GM12878 (cell line): ENCODE measurements at regions of chr1 and their contacts with region 1.

Region 1: DNA sequence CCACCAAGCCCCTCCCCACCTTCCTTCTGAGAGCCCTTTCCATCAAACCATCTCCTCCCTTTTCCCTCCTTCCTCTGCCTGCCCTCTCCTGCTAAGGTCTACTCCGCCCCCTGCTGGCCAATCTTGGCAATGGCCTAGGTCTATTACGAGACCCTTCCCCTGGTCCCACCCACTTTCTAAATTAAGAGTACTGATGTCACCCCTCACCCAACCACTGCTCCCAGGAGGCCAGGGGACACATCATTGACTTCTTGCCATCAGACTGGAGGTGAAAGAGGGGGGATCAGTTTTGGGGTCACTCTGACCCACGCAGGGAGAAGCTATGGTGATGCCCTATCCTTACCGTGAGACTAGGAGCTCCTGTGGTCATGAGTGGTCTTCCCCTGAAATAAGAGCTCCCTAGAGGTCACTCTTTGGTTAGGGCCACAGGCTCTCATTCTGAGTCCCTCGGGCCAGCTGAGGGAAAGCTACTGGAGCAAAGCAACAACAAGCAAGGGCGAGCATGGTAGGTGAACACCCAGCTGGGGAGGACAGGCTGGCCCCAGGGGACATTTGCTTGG is 34.6 kb upstream of the S100A7 start:
- DNase-seq: no peak
- ATAC-seq: peak; percentile 89
- H3K4me3 ChIP-seq: no peak overlapping the region
- H3K27ac ChIP-seq: no peak overlapping the region
- H3K4me1 ChIP-seq: peaks cover 3% of the 10 kb centered on the region; the same call in 1 of the 2 replicates
- H3K27me3 ChIP-seq: no peaks in the 10 kb centered on the region; a peak in 2 of 4 replicates
- CTCF ChIP-seq: peak; percentile 79 to 91 (median 89)
- EP300 ChIP-seq: no peak
- POLR2A ChIP-seq: no peak
- RAD21 ChIP-seq: peak; percentile 87

Region 2: GRCh38 chr1:153312570-153313193 is 182.4 kb before region 1 on chr1 and contains the start of gene PGLYRP3:
- CTCF ChIA-PET with region 1: interaction called, 14 read pairs
- POLR2A ChIA-PET with region 1: no interaction called
- RAD21 ChIA-PET with region 1: no interaction called
- SMC1A ChIA-PET with region 1: no interaction called
- in situ Hi-C with region 1: no loop called
- intact Hi-C with region 1: no loop called
- DNase-seq: no peak
- ATAC-seq: no peak
- H3K4me3 ChIP-seq: no peak within 1 kb of the TSS
- H3K27ac ChIP-seq: no peak within 1 kb of the TSS
- H3K4me1 ChIP-seq: no peaks in the 10 kb centered on the region
- H3K27me3 ChIP-seq: no peaks in the 10 kb centered on the region
- CTCF ChIP-seq: peak in 2 of 3 experiments; percentile 25 to 36; a peak in 3 of 6 replicates
- EP300 ChIP-seq: no peak
- POLR2A ChIP-seq: no peak
- RAD21 ChIP-seq: peak; percentile 59
- polyA plus RNA-seq, gene PGLYRP3: not detected

Region 3: GRCh38 chr1:153344531-153344981 is 150.5 kb before region 1 on chr1:
- CTCF ChIA-PET with region 1: interaction called, 326 read pairs
- POLR2A ChIA-PET with region 1: no interaction called
- RAD21 ChIA-PET with region 1: interaction called, 94 read pairs
- SMC1A ChIA-PET with region 1: interaction called, 12 read pairs
- in situ Hi-C with region 1: no loop called
- intact Hi-C with region 1: no loop called
- DNase-seq: no peak
- ATAC-seq: peak; percentile 24
- H3K4me3 ChIP-seq: no peak overlapping the region; the same call in 1 of the 2 replicates
- H3K27ac ChIP-seq: peak overlapping the region; percentile 86
- H3K4me1 ChIP-seq: peaks cover 33% of the 10 kb centered on the region
- H3K27me3 ChIP-seq: no peaks in the 10 kb centered on the region
- CTCF ChIP-seq: no peak
- EP300 ChIP-seq: peak in 1 of 2 experiments; percentile 23; a peak in 1 of 4 replicates
- POLR2A ChIP-seq: no peak; the same call in 1 of the 2 replicates
- RAD21 ChIP-seq: no peak

Region 4: DNA sequence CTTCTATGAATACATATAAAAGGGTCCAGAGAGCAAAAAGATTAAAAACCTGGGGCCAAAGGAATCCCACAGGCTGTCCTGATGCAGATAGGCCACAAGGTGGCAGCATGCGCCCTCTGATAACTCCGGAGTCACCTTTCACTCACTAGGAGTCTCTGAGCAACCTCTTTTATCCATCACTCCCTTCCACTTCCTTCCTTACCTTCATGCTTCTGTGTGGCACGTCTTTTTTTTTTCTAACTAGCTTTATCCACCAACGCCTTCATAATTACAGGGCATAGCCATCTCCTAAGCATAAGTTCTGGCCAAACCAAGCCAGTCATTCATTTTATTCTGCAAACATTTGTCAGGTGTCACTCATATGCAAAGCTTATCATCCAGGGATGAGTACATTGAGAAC is 142.5 kb before region 1 on chr1:
- CTCF ChIA-PET with region 1: interaction called, 326 read pairs
- POLR2A ChIA-PET with region 1: interaction called, 4 read pairs
- RAD21 ChIA-PET with region 1: interaction called, 94 read pairs
- SMC1A ChIA-PET with region 1: interaction called, 106 read pairs
- in situ Hi-C with region 1: loop called (anchors 5 kb)
- intact Hi-C with region 1: loop called (anchors 1 kb)
- DNase-seq: no peak
- ATAC-seq: peak; percentile 73
- H3K4me3 ChIP-seq: no peak overlapping the region
- H3K27ac ChIP-seq: no peak overlapping the region
- H3K4me1 ChIP-seq: peaks cover 12% of the 10 kb centered on the region
- H3K27me3 ChIP-seq: no peaks in the 10 kb centered on the region
- CTCF ChIP-seq: peak; percentile 80 to 88 (median 83)
- EP300 ChIP-seq: no peak
- POLR2A ChIP-seq: no peak
- RAD21 ChIP-seq: peak; percentile 82

Region 5: GRCh38 chr1:153362187-153362775 is 132.8 kb before region 1 on chr1:
- CTCF ChIA-PET with region 1: interaction called, 41 read pairs
- POLR2A ChIA-PET with region 1: interaction called, 4 read pairs
- RAD21 ChIA-PET with region 1: interaction called, 18 read pairs
- SMC1A ChIA-PET with region 1: interaction called, 14 read pairs
- in situ Hi-C with region 1: no loop called
- intact Hi-C with region 1: no loop called
- DNase-seq: no peak
- ATAC-seq: no peak
- H3K4me3 ChIP-seq: no peak overlapping the region
- H3K27ac ChIP-seq: no peak overlapping the region
- H3K4me1 ChIP-seq: no peaks in the 10 kb centered on the region
- H3K27me3 ChIP-seq: no peaks in the 10 kb centered on the region
- CTCF ChIP-seq: no peak
- EP300 ChIP-seq: no peak
- POLR2A ChIP-seq: no peak
- RAD21 ChIP-seq: no peak

Region 6: GRCh38 chr1:153404768-153405167 is 90.3 kb before region 1 on chr1:
- CTCF ChIA-PET with region 1: interaction called, 14 read pairs
- POLR2A ChIA-PET with region 1: no interaction called
- RAD21 ChIA-PET with region 1: interaction called, 5 read pairs
- SMC1A ChIA-PET with region 1: interaction called, 6 read pairs
- in situ Hi-C with region 1: no loop called
- intact Hi-C with region 1: loop called (anchors 5 kb)
- DNase-seq: no peak
- ATAC-seq: peak; percentile 81
- H3K4me3 ChIP-seq: no peak overlapping the region
- H3K27ac ChIP-seq: no peak overlapping the region
- H3K4me1 ChIP-seq: no peaks in the 10 kb centered on the region
- H3K27me3 ChIP-seq: peaks cover 0 to 2% of the 10 kb centered on the region in 2 experiments; a peak in 1 of 4 replicates
- CTCF ChIP-seq: peak; percentile 44 to 55 (median 51); a peak in 5 of 6 replicates
- EP300 ChIP-seq: no peak
- POLR2A ChIP-seq: no peak
- RAD21 ChIP-seq: 0 out of 2 replicates have a peak, but pooled peaks have one; percentile 34

Region 7: GRCh38 chr1:153465811-153466636 is 29.0 kb before region 1 on chr1:
- CTCF ChIA-PET with region 1: interaction called, 41 read pairs
- POLR2A ChIA-PET with region 1: no interaction called
- RAD21 ChIA-PET with region 1: interaction called, 3 read pairs
- SMC1A ChIA-PET with region 1: interaction called, 3 read pairs
- in situ Hi-C with region 1: no loop called
- intact Hi-C with region 1: no loop called
- DNase-seq: no peak
- ATAC-seq: peak; percentile 94
- H3K4me3 ChIP-seq: no peak overlapping the region
- H3K27ac ChIP-seq: no peak overlapping the region
- H3K4me1 ChIP-seq: no peaks in the 10 kb centered on the region
- H3K27me3 ChIP-seq: peaks cover 0 to 3% of the 10 kb centered on the region in 2 experiments; a peak in 2 of 4 replicates
- CTCF ChIP-seq: peak; percentile 63 to 88 (median 84)
- EP300 ChIP-seq: no peak
- POLR2A ChIP-seq: no peak
- RAD21 ChIP-seq: peak; percentile 33